ENCODE measurements at regions of chr17 and their contacts with region 1.

Region 1: GRCh38 chr17:36705874-36706731 is 104.7 kb downstream of the MRM1 start:
- DNase-seq: peak; percentile 36 to 52 (median 47)
- H3K4me3 ChIP-seq: no peak overlapping the region
- H3K4me3 Mint-ChIP-seq: no peak overlapping the region
- H3K27ac ChIP-seq: no peak overlapping the region
- H3K27ac Mint-ChIP-seq: peak overlapping the region in 1 of 7 donors; percentile 11
- H3K4me1 ChIP-seq: no peaks in the 10 kb centered on the region
- H3K4me1 Mint-ChIP-seq: peaks cover 0 to 8% (median 0%) of the 10 kb centered on the region in 4 donors
- H3K27me3 ChIP-seq: peaks cover 6% of the 10 kb centered on the region
- H3K27me3 Mint-ChIP-seq: peaks cover 22 to 30% of the 10 kb centered on the region in 2 donors

Region 2: DNA sequence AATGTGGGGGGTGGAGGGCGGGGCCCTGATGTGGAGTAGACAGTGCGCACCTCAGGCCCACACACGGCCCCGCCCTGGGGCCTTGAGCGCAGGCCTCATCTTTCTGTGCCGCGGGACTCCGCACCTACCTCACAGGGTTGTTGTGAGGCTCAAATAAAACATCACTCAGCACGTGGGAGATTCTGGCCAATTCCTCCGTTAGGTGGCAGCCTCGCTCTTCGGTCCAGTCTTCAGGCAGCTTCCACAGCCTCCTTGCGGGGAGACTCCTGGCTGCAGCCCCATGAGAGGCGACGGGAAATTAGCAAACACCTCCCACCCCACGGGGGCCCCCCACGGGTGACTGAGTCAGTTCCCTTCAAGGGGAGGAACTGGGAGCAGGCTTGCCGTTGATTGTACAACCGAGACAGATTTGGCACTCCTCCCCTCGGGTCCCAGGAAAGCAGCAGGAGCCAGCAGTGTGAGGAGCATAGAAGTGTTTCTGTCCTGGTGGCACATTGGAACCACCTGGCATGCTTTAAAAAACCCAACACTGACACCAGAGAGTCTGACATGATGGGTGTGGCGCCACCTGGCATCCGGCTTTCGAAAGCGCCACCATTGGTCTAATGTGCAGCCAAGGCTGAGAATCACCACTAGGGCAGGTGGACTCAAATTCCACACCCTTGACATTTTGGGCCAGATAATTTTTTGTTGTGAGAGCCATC is 97.2 kb before region 1 on chr17:
- CTCF ChIA-PET with region 1: no interaction called
- POLR2A ChIA-PET with region 1: no interaction called
- intact Hi-C with region 1: no loop called
- DNase-seq: no peak
- H3K4me3 ChIP-seq: no peak overlapping the region
- H3K4me3 Mint-ChIP-seq: no peak overlapping the region
- H3K27ac ChIP-seq: no peak overlapping the region
- H3K27ac Mint-ChIP-seq: peak overlapping the region in 2 of 7 donors; percentile 57 to 69
- H3K4me1 ChIP-seq: peaks cover 15% of the 10 kb centered on the region
- H3K4me1 Mint-ChIP-seq: peaks cover 14 to 37% (median 22%) of the 10 kb centered on the region in 4 donors
- H3K27me3 ChIP-seq: no peaks in the 10 kb centered on the region
- H3K27me3 Mint-ChIP-seq: no peaks in the 10 kb centered on the region

Region 3: DNA sequence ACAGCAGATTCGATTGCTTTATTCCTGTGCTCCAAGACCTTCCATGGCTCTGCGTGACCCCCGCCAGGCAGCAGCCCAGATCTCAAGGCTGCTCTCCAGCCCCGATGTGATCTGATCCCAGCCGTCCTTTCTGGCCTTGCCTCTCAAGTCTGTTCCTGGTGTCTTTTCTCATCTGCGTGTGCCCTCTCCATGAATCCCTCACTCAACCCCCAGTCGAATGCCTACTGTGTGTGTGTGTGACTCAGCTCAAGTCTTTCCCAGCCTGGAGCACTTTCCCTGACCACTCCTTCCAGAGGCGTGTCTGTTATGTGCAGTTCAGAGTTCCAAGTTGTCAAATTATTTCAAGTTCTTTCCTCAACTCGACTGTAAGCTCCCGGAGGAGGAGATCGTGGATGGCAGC is 40.7 kb before region 1 on chr17:
- CTCF ChIA-PET with region 1: no interaction called
- POLR2A ChIA-PET with region 1: no interaction called
- intact Hi-C with region 1: no loop called
- DNase-seq: no peak
- H3K4me3 ChIP-seq: no peak overlapping the region
- H3K4me3 Mint-ChIP-seq: no peak overlapping the region
- H3K27ac ChIP-seq: no peak overlapping the region
- H3K27ac Mint-ChIP-seq: no peak overlapping the region
- H3K4me1 ChIP-seq: no peaks in the 10 kb centered on the region
- H3K4me1 Mint-ChIP-seq: peaks cover 0 to 4% (median 0%) of the 10 kb centered on the region in 4 donors
- H3K27me3 ChIP-seq: no peaks in the 10 kb centered on the region
- H3K27me3 Mint-ChIP-seq: peaks cover 5 to 7% of the 10 kb centered on the region in 2 donors

Region 4: GRCh38 chr17:36755586-36755985 is 49.5 kb after region 1 on chr17:
- CTCF ChIA-PET with region 1: interaction called, 15 read pairs
- POLR2A ChIA-PET with region 1: interaction called, 3 read pairs
- intact Hi-C with region 1: loop called (anchors 1 kb)
- DNase-seq: peak in 4 of 5 donors; percentile 28 to 34 (median 30)
- H3K4me3 ChIP-seq: no peak overlapping the region
- H3K4me3 Mint-ChIP-seq: no peak overlapping the region
- H3K27ac ChIP-seq: no peak overlapping the region
- H3K27ac Mint-ChIP-seq: no peak overlapping the region
- H3K4me1 ChIP-seq: no peaks in the 10 kb centered on the region
- H3K4me1 Mint-ChIP-seq: peaks cover 2 to 7% (median 6%) of the 10 kb centered on the region in 4 donors
- H3K27me3 ChIP-seq: no peaks in the 10 kb centered on the region
- H3K27me3 Mint-ChIP-seq: no peaks in the 10 kb centered on the region

Region 5: GRCh38 chr17:37212179-37212578 is 506.1 kb after region 1 on chr17:
- CTCF ChIA-PET with region 1: no interaction called
- POLR2A ChIA-PET with region 1: no interaction called
- intact Hi-C with region 1: no loop called
- DNase-seq: no peak
- H3K4me3 ChIP-seq: no peak overlapping the region
- H3K4me3 Mint-ChIP-seq: no peak overlapping the region
- H3K27ac ChIP-seq: no peak overlapping the region
- H3K27ac Mint-ChIP-seq: no peak overlapping the region
- H3K4me1 ChIP-seq: no peaks in the 10 kb centered on the region
- H3K4me1 Mint-ChIP-seq: no peaks in the 10 kb centered on the region
- H3K27me3 ChIP-seq: no peaks in the 10 kb centered on the region
- H3K27me3 Mint-ChIP-seq: no peaks in the 10 kb centered on the region